ENCODE measurements at regions of chr4 and their contacts with region 1.

Region 1: DNA sequence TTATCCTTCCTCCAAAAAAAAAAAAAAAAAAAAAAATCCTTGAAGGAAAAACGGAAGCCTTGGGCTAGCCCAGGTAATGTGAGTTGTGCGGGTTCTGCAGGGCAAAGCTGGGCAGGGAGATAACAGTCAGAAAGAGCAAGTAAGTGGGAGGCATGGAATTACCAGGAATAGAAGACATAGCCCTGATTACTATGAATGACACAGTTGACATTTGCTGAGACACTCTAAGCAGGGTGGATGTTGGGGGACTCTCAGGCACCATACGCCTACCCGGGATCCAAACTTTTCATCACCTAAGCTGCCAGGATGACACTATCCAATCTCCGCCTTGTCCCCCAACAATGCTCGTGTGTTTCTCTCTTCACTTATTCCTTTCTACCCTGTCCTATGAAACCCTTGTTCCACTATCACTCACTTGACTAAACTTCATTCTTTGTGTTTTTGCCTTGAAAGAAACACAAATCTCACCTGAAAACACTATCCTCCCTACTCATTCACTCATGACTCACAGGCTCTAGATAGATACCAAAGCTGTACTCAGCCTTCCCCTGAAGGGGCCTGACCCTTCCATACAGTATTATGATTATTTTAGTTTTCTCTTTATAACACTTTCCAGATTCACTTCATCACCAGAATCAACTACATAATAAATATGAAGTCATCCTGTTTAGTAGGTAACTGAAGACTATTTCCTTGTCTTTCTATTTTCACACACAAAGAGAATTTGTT is 158.4 kb downstream of the INPP4B start:
- DNase-seq: no peak
- H3K4me3 ChIP-seq: no peak overlapping the region
- H3K27ac ChIP-seq: no peak overlapping the region
- H3K4me1 ChIP-seq: no peaks in the 10 kb centered on the region
- H3K27me3 ChIP-seq: no peaks in the 10 kb centered on the region
- CTCF ChIP-seq: no peak
- EP300 ChIP-seq: no peak
- POLR2A ChIP-seq: no peak

Region 2: GRCh38 chr4:144202081-144202480 is 1514.4 kb after region 1 on chr4:
- in situ Hi-C with region 1: no loop called
- intact Hi-C with region 1: loop called (anchors 5 kb)
- DNase-seq: no peak
- H3K4me3 ChIP-seq: no peak overlapping the region
- H3K27ac ChIP-seq: no peak overlapping the region
- H3K4me1 ChIP-seq: no peaks in the 10 kb centered on the region
- H3K27me3 ChIP-seq: no peaks in the 10 kb centered on the region
- CTCF ChIP-seq: no peak
- EP300 ChIP-seq: no peak
- POLR2A ChIP-seq: no peak

Measured in transverse colon (tissue), 4 donors.